ENCODE measurements at regions of chr3 and their contacts with region 1.

Region 1: DNA sequence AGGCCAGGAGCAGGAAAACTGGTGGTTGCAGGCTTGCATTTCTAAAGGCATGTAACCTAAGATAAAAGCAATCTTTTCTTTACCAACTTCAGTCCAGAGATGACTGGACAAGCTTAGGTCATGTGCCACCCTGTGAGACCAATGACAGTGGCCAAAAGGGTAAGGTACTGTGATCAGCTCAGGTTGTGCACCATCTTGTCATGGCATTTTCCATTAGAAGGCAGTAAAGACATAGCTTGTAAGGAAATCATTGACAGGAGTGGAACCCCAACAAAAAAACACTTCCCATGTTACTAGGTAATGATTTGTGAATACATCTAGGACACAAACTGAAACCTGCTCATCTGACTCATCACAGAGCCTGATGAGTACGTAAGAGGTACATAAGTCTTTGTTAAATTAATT is 35.2 kb downstream of the SSR3 start:
- DNase-seq: no peak
- ATAC-seq: no peak
- H3K4me3 ChIP-seq: no peak overlapping the region
- H3K27ac ChIP-seq: peak overlapping the region in 1 of 12 donors; percentile 49
- H3K4me1 ChIP-seq: peaks cover 0 to 18% (median 8%) of the 10 kb centered on the region in 12 donors
- H3K27me3 ChIP-seq: no peaks in the 10 kb centered on the region
- CTCF ChIP-seq: no peak
- POLR2A ChIP-seq: no peak

Region 2: DNA sequence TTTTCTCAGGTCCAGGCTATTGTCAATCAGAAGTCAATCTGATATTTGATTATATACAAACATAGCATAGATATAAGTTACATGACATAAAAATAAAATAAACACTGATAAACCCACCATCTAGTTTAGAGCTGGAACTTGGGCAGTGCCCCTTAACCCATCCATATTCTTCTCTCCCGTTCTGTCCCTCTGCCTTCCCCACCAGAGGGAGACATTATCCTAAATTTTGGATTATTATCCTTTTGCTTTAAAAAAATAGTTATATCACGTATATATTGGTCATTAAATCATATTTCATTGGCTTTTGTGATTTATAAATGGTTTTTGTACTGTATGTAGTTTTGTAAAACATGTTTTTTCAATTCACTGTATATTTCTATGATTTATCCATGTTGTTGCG is 541.4 kb before region 1 on chr3:
- intact Hi-C with region 1: no loop called
- DNase-seq: no peak
- ATAC-seq: no peak
- H3K4me3 ChIP-seq: no peak overlapping the region
- H3K27ac ChIP-seq: no peak overlapping the region
- H3K4me1 ChIP-seq: no peaks in the 10 kb centered on the region
- H3K27me3 ChIP-seq: no peaks in the 10 kb centered on the region
- CTCF ChIP-seq: peak in 3 of 12 donors; percentile 9 to 21 (median 20)
- POLR2A ChIP-seq: no peak

Region 3: DNA sequence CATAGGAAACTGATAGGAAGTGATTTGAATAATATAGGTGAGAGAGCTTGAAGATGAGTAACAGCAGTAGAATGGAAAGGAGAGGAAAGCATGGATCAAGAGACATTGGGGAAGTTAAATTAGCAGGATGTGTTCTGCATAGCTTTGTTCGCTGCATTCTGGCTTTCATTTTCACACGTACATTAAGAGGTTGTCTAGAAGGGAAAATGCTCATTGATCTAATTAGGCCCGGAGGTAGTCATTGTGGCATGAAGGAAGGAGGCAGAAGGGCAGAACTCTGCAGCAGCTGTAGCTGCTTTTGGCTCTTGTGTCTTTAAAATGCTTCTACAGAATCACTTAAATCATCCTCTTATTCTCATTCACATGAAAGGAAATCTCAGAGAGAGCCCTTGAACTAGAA is 359.1 kb before region 1 on chr3:
- intact Hi-C with region 1: loop called in 1 of 10 experiments (anchors 5 kb)
- DNase-seq: no peak
- ATAC-seq: no peak
- H3K4me3 ChIP-seq: no peak overlapping the region
- H3K27ac ChIP-seq: no peak overlapping the region
- H3K4me1 ChIP-seq: peaks cover 0 to 5% (median 0%) of the 10 kb centered on the region in 12 donors
- H3K27me3 ChIP-seq: no peaks in the 10 kb centered on the region
- CTCF ChIP-seq: no peak
- POLR2A ChIP-seq: no peak